ENCODE measurements at regions of chrX and their contacts with region 1.

Region 1: GRCh38 chrX:104922206-104922621 is 298.3 kb downstream of the TEX13A start:
- DNase-seq: peak; percentile 53
- H3K4me3 ChIP-seq: no peak overlapping the region
- H3K27ac ChIP-seq: no peak overlapping the region
- H3K4me1 ChIP-seq: no peaks in the 10 kb centered on the region
- H3K27me3 ChIP-seq: no peaks in the 10 kb centered on the region
- CTCF ChIP-seq: peak; percentile 83 to 89
- POLR2A ChIP-seq: no peak

Region 2: DNA sequence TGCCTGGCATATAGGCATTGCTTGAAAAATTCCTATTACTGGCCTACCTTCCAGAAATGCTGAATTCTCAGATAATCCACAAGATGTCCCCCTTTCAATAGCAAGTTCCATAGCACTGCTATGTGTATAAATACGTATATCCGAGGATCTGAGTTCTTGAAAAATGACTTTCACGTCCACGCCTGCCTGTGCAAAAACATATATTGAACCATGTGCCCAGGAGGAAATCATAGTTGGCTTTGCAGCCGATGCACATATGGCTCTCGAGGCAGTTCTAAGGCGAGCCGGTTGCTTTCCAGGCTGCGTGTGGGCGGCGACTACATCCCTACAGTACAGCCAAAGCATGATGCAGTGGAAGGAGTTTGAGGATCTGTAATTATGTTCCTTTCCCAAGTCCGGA is 612.1 kb before region 1 on chrX:
- CTCF ChIA-PET with region 1: interaction called, 5 read pairs
- POLR2A ChIA-PET with region 1: no interaction called
- dilution Hi-C with region 1: no loop called
- intact Hi-C with region 1: loop called (anchors 2 kb)
- DNase-seq: peak; percentile 39
- H3K4me3 ChIP-seq: peak overlapping the region in 1 of 3 experiments; percentile 36
- H3K27ac ChIP-seq: no peak overlapping the region
- H3K4me1 ChIP-seq: peaks cover 6% of the 10 kb centered on the region
- H3K27me3 ChIP-seq: no peaks in the 10 kb centered on the region
- CTCF ChIP-seq: peak; percentile 15 to 35
- POLR2A ChIP-seq: no peak